ENCODE measurements at regions of chr20 and their contacts with region 1.

Region 1: DNA sequence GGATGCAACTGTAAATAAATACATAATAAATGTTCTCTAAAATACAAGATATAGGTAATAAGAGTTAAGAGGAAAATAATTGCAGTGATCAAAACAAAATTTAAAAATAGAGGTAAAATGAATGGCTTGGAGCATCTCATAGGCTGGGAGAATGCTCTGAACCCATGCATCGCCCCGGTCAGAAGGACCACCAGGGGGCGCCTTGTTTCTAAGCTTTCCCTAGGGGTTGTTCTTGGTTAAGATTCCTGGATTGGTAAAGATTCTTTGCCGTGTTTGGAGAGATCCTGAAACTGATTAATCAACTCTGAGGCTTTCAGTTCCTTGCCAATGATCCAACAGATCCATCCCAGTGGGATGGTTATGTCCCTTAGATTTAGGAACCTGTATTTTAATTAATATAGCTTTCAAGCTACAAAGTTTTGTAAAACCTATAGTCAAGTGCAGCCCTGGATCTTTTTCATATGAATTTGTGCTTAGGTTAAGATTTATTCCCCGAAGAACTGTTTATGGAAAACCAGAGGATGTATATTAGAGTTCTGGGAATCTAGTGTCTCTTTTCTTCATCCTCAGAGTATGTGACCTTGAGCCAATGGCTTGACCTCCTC is 45.3 kb upstream of the PRELID3B start:
- DNase-seq: peak; percentile 77
- H3K4me3 Mint-ChIP-seq: no peak overlapping the region
- H3K27ac Mint-ChIP-seq: no peak overlapping the region
- H3K4me1 Mint-ChIP-seq: peaks cover 16% of the 10 kb centered on the region
- H3K27me3 Mint-ChIP-seq: peaks cover 51% of the 10 kb centered on the region
- CTCF ChIP-seq: peak; percentile 81

Region 2: DNA sequence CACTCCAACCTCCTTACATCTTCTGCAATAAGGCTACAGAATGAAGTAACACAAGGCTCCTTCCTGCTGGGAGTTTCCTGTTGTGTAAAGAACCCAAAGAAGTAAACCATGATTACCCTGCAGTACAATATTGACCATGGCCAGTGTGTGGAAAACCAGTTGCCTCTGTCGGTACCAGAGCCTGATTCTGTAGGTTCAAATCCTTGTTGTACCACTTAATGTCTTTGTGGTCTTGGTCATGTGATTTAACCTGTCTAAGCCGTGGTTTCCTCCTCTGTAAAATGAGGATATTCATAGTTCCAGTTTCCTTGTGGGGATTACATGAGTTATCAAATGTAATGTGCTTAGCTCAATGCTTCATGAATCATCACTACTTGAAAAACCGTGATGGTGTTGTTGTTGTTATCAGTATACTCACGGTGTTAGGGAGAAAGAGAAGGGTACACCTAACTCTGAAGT is 14.9 kb after region 1 on chr20:
- CTCF ChIA-PET with region 1: interaction called, 15 read pairs
- POLR2A ChIA-PET with region 1: no interaction called
- intact Hi-C with region 1: no loop called
- DNase-seq: no peak
- H3K4me3 Mint-ChIP-seq: no peak overlapping the region
- H3K27ac Mint-ChIP-seq: no peak overlapping the region
- H3K4me1 Mint-ChIP-seq: no peaks in the 10 kb centered on the region
- H3K27me3 Mint-ChIP-seq: peaks cover 98% of the 10 kb centered on the region
- CTCF ChIP-seq: no peak

Region 3: GRCh38 chr20:59207742-59208357 is 119.9 kb after region 1 on chr20:
- CTCF ChIA-PET with region 1: interaction called, 17 read pairs
- POLR2A ChIA-PET with region 1: interaction called, 3 read pairs
- intact Hi-C with region 1: no loop called
- DNase-seq: peak; percentile 59
- H3K4me3 Mint-ChIP-seq: no peak overlapping the region
- H3K27ac Mint-ChIP-seq: no peak overlapping the region
- H3K4me1 Mint-ChIP-seq: no peaks in the 10 kb centered on the region
- H3K27me3 Mint-ChIP-seq: peaks cover 96% of the 10 kb centered on the region
- CTCF ChIP-seq: peak; percentile 52

Region 4: DNA sequence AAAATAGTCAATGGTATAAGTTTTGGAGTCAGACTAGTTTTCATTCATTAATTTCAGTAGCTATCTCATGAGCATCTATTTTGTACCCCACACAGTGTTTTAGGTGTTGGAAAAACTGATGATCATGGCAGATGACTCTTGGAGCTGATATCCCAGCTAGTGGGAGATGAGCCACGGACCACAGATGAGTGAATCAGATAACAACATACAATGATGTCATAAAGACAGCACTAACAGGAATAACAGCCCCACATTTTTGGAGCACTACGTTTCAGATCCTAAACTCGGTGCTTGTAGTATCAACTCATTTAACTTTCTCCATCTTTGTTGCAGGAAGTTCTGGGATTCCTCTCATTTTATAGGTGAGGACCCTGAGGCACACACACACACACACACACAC is 144.7 kb after region 1 on chr20:
- CTCF ChIA-PET with region 1: interaction called, 22 read pairs
- POLR2A ChIA-PET with region 1: interaction called, 3 read pairs
- intact Hi-C with region 1: no loop called
- DNase-seq: no peak
- H3K4me3 Mint-ChIP-seq: no peak overlapping the region
- H3K27ac Mint-ChIP-seq: no peak overlapping the region
- H3K4me1 Mint-ChIP-seq: no peaks in the 10 kb centered on the region
- H3K27me3 Mint-ChIP-seq: peaks cover 71% of the 10 kb centered on the region
- CTCF ChIP-seq: no peak